ENCODE measurements at regions of chr15 and their contacts with region 1.

Region 1: DNA sequence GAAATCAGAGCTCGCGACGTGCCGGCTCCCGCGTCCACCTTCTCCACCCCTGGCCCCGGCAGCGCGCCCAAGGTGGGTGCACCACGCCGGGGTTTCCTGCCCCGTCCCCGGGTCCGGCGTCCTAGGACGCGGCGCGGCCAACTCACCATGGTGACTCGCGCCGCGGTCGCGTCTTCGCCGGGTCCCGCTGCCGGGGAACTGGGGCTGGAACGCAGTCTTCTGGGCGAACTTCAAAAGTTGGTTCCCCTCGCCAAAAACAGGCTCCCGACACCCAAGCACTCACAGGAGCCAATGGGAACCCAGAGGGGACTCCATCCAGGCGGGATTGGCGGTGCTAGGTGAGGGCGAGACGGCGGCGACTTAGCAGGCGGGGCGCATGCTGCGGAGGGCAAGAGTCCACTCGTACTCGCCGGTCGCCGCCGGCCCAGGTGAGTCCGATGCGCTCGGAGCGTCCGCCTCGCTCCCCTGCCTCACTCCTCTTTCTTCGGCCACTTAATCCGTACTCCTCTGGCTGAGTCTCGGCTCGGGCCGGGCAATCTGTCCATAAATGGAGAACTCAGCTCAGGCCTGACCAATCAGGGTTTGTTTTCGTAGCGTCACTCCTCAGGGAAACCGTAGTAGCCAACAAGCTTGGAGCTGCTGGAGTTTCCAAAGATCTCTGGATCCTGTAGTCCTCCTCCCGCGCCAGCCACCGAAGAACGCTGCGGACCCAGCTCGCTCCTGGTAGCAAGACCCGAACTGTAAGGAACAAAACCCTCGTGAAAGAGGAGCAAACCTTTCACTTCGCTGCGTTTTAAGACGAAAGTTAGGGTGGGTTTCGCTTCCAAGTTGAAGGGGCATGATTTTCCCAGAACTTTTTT is at the start of gene MYO1E:
- DNase-seq: peak; percentile 78 to 95
- H3K4me3 ChIP-seq: peak within 1 kb of the TSS; percentile 73 to 99
- H3K27ac ChIP-seq: peak within 1 kb of the TSS; percentile 91 to 99
- H3K4me1 ChIP-seq: no peaks in the 10 kb centered on the region
- H3K27me3 ChIP-seq: no peaks in the 10 kb centered on the region
- CTCF ChIP-seq: no peak
- total RNA-seq, gene MYO1E: 48.0 TPM

Region 2: GRCh38 chr15:58546635-58547627 is 825.7 kb before region 1 on chr15:
- intact Hi-C with region 1: no loop called
- DNase-seq: peak in 1 of 2 donors; percentile 88
- H3K4me3 ChIP-seq: no peak overlapping the region
- H3K27ac ChIP-seq: peak overlapping the region; percentile 29 to 44
- H3K4me1 ChIP-seq: peaks cover 0 to 10% of the 10 kb centered on the region in 2 donors
- H3K27me3 ChIP-seq: no peaks in the 10 kb centered on the region
- CTCF ChIP-seq: no peak

Region 3: GRCh38 chr15:59339252-59339672 is 33.3 kb before region 1 on chr15:
- intact Hi-C with region 1: no loop called
- DNase-seq: no peak
- H3K4me3 ChIP-seq: no peak overlapping the region
- H3K27ac ChIP-seq: peak overlapping the region in 1 of 2 donors; percentile 40
- H3K4me1 ChIP-seq: peaks cover 5 to 12% of the 10 kb centered on the region in 2 donors
- H3K27me3 ChIP-seq: no peaks in the 10 kb centered on the region
- CTCF ChIP-seq: no peak

Region 4: GRCh38 chr15:59437817-59438562 is 65.4 kb after region 1 on chr15 and contains the start of gene FAM81A:
- intact Hi-C with region 1: loop called (anchors 2 kb)
- DNase-seq: peak; percentile 11 to 92
- H3K4me3 ChIP-seq: peak within 1 kb of the TSS; percentile 59 to 83
- H3K27ac ChIP-seq: peak within 1 kb of the TSS in 1 of 2 donors; percentile 15
- H3K4me1 ChIP-seq: peaks cover 0 to 12% of the 10 kb centered on the region in 2 donors
- H3K27me3 ChIP-seq: no peaks in the 10 kb centered on the region
- CTCF ChIP-seq: no peak
- total RNA-seq, gene FAM81A: not detected